ENCODE measurements at regions of chr4 and their contacts with region 1.

Region 1: DNA sequence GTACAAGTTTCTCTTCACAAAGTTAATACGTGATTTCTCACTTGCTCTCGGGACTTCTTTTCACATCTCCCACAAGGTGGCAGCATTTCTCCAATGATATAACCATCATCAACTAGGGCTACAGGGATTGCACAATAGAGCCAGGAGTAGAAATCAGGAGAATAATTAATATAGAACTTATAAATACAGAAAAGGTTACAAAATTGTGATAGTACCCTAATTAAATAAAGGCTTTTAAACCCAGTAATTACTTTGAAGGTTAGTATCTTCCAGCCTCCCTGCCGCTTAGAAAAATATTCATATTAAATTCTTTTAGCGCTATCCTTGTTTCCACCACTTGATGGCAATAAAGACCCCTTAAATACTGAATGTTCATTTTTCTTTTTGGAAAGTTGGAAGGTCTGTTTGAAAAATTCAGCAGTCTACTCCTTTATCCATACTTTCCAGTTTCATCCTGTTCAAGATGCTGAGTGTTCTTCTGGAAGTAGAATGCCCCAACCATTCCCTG is 65.8 kb downstream of the RASGEF1B start:
- DNase-seq: peak; percentile 77
- ATAC-seq: peak; percentile 77
- H3K4me3 ChIP-seq: no peak overlapping the region
- H3K27ac ChIP-seq: no peak overlapping the region
- H3K4me1 ChIP-seq: no peaks in the 10 kb centered on the region
- H3K27me3 ChIP-seq: no peaks in the 10 kb centered on the region; the same call in none of the 2 replicates
- CTCF ChIP-seq: peak; percentile 72
- POLR2A ChIP-seq: no peak
- RAD21 ChIP-seq: peak; percentile 64

Region 2: DNA sequence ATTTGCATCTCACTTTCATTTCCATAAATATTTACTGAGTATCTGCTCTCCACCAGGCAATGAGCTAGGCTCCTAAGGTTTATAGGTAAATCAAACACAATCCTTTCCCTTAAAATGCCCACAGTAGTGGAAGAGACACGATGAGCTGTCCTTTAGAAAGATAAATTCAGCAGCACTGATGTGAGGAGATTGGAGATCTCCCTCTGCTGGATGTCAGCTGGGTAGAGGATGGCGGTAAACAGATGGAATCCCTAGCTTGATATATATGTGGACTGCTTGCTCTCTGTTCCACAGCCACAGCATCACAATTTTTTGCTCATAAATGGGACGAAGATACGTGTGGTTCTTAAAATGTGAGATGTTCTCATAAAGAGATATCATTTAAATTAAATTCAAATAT is 282.1 kb after region 1 on chr4:
- CTCF ChIA-PET with region 1: no interaction called
- POLR2A ChIA-PET with region 1: no interaction called
- dilution Hi-C with region 1: no loop called
- in situ Hi-C with region 1: no loop called
- intact Hi-C with region 1: loop called (anchors 2 kb)
- DNase-seq: no peak
- ATAC-seq: peak; percentile 71
- H3K4me3 ChIP-seq: no peak overlapping the region
- H3K27ac ChIP-seq: no peak overlapping the region
- H3K4me1 ChIP-seq: no peaks in the 10 kb centered on the region
- H3K27me3 ChIP-seq: no peaks in the 10 kb centered on the region
- CTCF ChIP-seq: 0 out of 2 replicates have a peak, but pooled peaks have one; percentile 13
- POLR2A ChIP-seq: no peak
- RAD21 ChIP-seq: no peak

Region 3: GRCh38 chr4:81844717-81845116 is 438.8 kb after region 1 on chr4:
- CTCF ChIA-PET with region 1: no interaction called
- POLR2A ChIA-PET with region 1: no interaction called
- dilution Hi-C with region 1: loop called (anchors 25 kb)
- in situ Hi-C with region 1: loop called (anchors 10 kb)
- intact Hi-C with region 1: loop called (anchors 1 kb)
- DNase-seq: peak; percentile 57
- ATAC-seq: peak; percentile 97
- H3K4me3 ChIP-seq: no peak overlapping the region
- H3K27ac ChIP-seq: no peak overlapping the region
- H3K4me1 ChIP-seq: no peaks in the 10 kb centered on the region
- H3K27me3 ChIP-seq: no peaks in the 10 kb centered on the region
- CTCF ChIP-seq: peak; percentile 76
- POLR2A ChIP-seq: no peak
- RAD21 ChIP-seq: peak; percentile 74

Region 4: DNA sequence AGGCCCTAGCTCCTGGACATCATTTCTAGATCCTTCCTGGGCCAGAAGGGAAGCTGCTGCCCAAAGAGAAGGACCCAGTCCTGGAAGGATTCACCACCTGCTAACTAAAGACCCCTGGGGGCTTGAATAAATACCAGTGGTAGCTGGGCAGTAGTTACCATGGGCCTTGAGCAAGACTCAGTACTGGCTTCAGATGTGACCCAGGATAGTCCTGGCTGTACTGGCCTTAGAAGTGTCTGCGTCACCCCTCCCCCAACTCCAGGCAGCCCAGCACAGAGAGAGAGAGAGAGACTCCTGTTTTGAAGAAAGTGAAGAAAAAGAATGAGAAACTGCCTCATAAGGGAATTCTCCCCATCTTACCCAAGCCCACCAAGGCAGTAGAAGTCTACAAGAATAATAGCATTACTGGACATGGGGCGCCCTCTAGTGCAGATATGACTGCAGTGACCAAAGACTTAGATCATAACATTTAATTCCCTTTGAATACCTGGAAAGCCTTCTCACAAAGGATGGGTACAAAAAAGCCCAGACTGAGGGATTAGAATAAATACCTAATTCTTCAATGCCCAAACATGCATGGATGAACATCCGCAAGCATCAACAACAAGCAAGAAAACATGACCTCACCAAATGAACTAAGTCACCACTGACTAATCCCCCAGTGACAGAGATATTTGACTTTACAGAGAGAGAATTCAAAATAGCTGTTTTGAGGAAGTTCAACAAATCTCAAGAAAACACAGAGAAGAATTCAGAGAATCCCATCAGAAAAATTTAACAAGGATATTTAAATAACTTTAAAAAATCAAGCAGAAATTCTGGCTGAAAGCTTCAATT is 796.1 kb after region 1 on chr4:
- CTCF ChIA-PET with region 1: no interaction called
- POLR2A ChIA-PET with region 1: no interaction called
- dilution Hi-C with region 1: no loop called
- in situ Hi-C with region 1: loop called (anchors 10 kb)
- intact Hi-C with region 1: loop called (anchors 1 kb)
- DNase-seq: peak; percentile 27
- ATAC-seq: peak; percentile 46; the same call in 1 of the 2 replicates
- H3K4me3 ChIP-seq: no peak overlapping the region
- H3K27ac ChIP-seq: no peak overlapping the region
- H3K4me1 ChIP-seq: no peaks in the 10 kb centered on the region
- H3K27me3 ChIP-seq: no peaks in the 10 kb centered on the region
- CTCF ChIP-seq: peak; percentile 61
- POLR2A ChIP-seq: no peak
- RAD21 ChIP-seq: peak; percentile 80

Region 5: GRCh38 chr4:82268050-82268825 is 862.3 kb after region 1 on chr4:
- CTCF ChIA-PET with region 1: no interaction called
- POLR2A ChIA-PET with region 1: no interaction called
- dilution Hi-C with region 1: no loop called
- in situ Hi-C with region 1: no loop called
- intact Hi-C with region 1: loop called (anchors 1 kb)
- DNase-seq: peak; percentile 50
- ATAC-seq: peak; percentile 99
- H3K4me3 ChIP-seq: no peak overlapping the region
- H3K27ac ChIP-seq: no peak overlapping the region
- H3K4me1 ChIP-seq: no peaks in the 10 kb centered on the region
- H3K27me3 ChIP-seq: peaks cover 3% of the 10 kb centered on the region; the same call in 1 of the 2 replicates
- CTCF ChIP-seq: peak; percentile 70
- POLR2A ChIP-seq: no peak
- RAD21 ChIP-seq: peak; percentile 67

Region 6: GRCh38 chr4:82360298-82361177 is 954.6 kb after region 1 on chr4:
- CTCF ChIA-PET with region 1: no interaction called
- POLR2A ChIA-PET with region 1: no interaction called
- dilution Hi-C with region 1: no loop called
- in situ Hi-C with region 1: no loop called
- intact Hi-C with region 1: loop called (anchors 5 kb)
- DNase-seq: peak; percentile 29
- ATAC-seq: peak; percentile 69
- H3K4me3 ChIP-seq: no peak overlapping the region
- H3K27ac ChIP-seq: no peak overlapping the region
- H3K4me1 ChIP-seq: peaks cover 7% of the 10 kb centered on the region
- H3K27me3 ChIP-seq: no peaks in the 10 kb centered on the region
- CTCF ChIP-seq: peak; percentile 62
- POLR2A ChIP-seq: no peak
- RAD21 ChIP-seq: peak; percentile 54